ENCODE measurements at regions of chr5 and their contacts with region 1.

Region 1: DNA sequence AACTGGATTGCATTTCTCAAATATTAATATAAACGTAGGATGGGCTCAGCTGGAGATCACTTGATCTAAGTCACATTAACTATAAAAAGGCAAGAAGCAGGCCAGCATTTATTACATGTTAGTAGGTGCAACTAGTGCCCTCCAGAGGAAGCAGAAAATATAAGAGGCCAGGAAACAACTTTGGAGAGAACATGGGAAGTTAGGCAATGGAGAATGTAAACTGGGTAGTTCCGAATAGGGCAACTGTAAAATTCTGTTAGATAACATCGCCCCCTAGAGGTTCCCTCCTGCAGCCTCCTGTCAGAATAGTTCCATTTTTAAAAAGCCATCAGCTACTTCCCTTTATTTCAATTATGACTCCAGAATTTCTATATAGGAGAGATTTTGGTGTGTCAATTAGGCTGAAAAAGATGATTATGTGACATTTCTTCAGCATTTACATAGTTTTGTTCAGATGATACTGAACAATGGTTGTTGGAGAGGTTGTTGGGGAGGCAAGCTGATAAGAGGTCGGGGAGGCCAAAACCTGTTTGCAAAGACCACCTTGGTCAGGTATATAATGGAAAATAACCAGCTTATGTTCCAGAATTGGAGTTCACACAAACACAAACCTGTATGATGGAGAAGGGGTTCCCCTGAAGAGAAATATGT is 22.4 kb downstream of the CCL28 start:
- DNase-seq: peak in 12 of 14 experiments; percentile 6 to 79 (median 18)
- ATAC-seq: peak; percentile 82
- H3K4me3 ChIP-seq: no peak overlapping the region
- H3K4me3 Mint-ChIP-seq: no peak overlapping the region
- H3K27ac ChIP-seq: no peak overlapping the region
- H3K27ac Mint-ChIP-seq: peak overlapping the region; percentile 28
- H3K4me1 ChIP-seq: no peaks in the 10 kb centered on the region
- H3K4me1 Mint-ChIP-seq: peaks cover 27% of the 10 kb centered on the region
- H3K27me3 ChIP-seq: no peaks in the 10 kb centered on the region
- H3K27me3 Mint-ChIP-seq: no peaks in the 10 kb centered on the region
- CTCF ChIP-seq: peak; percentile 85

Region 2: DNA sequence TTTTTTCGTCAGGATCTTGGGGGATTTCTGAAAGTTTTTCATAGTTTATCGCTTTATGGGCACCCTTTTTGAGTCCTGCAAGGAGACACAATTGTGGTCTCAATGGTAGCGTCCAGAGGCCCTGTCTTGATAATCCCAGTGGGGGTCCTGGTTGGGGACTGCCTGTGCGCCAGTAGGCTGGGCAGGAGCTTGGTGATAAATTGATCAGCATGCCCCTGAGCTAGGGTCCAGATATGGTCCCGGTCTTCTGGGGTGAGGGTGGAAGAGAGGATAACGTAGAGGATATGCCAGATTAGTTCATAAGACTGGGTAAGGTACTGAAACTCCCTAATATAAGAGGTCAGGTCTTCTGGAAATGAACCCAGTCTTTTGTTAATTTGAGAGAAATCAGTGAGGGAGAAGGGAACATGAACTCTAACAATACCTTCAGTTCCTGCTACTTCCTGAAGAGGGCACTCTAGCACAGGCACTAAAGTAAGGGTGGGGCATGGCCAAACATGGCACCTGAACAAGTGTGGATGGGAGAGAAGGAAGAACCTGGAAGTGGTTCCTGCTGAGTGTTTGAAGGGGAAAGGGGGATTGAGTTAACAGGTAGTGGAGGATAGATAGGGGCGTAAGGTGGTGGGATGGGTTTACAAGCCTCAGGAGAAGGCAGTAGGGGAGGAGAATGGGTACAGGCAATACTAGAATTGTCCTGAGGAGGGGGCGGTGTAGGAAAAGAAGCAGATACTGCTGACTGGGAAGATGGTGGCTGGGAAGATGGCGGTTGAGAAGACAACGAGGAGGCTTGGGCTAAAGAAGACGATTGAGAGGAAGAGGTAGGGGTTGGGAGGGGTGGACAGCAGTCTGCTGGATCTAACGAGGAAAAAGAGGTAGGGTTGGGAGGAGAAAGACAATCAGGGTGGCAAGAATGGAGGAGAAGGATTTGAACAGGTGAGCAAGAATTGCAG is 315.9 kb before region 1 on chr5:
- CTCF ChIA-PET with region 1: no interaction called
- POLR2A ChIA-PET with region 1: no interaction called
- intact Hi-C with region 1: loop called (anchors 10 kb)
- DNase-seq: peak in 11 of 14 experiments; percentile 22 to 79 (median 38)
- ATAC-seq: peak; percentile 82
- H3K4me3 ChIP-seq: no peak overlapping the region
- H3K4me3 Mint-ChIP-seq: no peak overlapping the region
- H3K27ac ChIP-seq: no peak overlapping the region
- H3K27ac Mint-ChIP-seq: peak overlapping the region; percentile 27
- H3K4me1 ChIP-seq: peaks cover 43% of the 10 kb centered on the region
- H3K4me1 Mint-ChIP-seq: peaks cover 46% of the 10 kb centered on the region
- H3K27me3 ChIP-seq: no peaks in the 10 kb centered on the region
- H3K27me3 Mint-ChIP-seq: no peaks in the 10 kb centered on the region
- CTCF ChIP-seq: peak; percentile 70

Region 3: DNA sequence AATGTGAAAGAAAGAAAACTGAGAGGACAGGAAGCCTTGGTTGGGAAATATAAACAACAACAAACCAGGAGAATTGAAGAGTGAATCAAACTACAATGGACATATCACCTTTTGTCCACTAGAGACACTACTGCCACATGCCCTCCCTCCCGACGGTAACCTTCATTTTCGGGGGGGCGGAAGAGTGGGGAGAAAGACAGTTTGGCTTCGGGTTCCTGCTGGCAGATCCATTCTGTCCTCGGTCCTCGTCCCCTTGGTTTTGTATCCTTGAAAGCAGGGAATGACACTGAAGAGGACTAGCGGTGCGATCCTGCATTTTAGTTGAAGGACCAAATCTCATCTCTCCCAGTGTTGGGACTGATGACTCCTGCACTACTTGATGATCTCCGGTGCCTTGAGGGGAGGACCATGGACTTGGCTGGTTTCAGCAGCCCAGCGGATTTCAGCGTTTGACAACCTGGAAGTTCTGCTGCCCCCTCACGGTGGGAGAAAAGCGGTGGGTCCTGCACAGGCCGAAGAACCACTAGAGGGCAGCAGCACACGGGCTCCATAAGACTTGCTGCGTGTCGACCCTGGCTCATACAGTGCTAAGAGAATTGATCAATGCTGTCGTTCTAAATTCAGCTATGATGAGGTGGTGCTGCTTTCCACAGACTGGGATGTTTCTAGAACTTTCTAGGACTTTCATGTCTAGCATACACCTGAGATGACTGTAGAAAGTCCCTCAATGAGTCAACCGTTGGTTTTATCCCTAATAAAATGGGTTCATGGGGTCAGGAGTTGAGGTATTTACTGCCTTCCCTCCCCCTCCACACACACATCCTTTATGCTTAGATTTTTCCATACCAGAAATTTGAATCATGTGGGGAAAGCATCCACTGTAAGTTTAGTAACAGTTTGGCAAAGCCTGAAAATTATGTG is 284.2 kb before region 1 on chr5:
- CTCF ChIA-PET with region 1: interaction called, 3 read pairs
- POLR2A ChIA-PET with region 1: no interaction called
- intact Hi-C with region 1: loop called in 1 of 2 experiments (anchors 10 kb)
- DNase-seq: peak; percentile 85 to 97 (median 88)
- ATAC-seq: peak; percentile 90
- H3K4me3 ChIP-seq: peak overlapping the region; percentile 51
- H3K4me3 Mint-ChIP-seq: peak overlapping the region; percentile 91
- H3K27ac ChIP-seq: no peak overlapping the region
- H3K27ac Mint-ChIP-seq: peak overlapping the region; percentile 78
- H3K4me1 ChIP-seq: peaks cover 36% of the 10 kb centered on the region
- H3K4me1 Mint-ChIP-seq: peaks cover 41% of the 10 kb centered on the region
- H3K27me3 ChIP-seq: no peaks in the 10 kb centered on the region
- H3K27me3 Mint-ChIP-seq: no peaks in the 10 kb centered on the region
- CTCF ChIP-seq: peak; percentile 100

Measured in CD4-positive, alpha-beta T cell (primary cell).